Psoas muscle (tissue), 8 donors: ENCODE measurements at regions of chrX and their contacts with region 1.

Region 1: GRCh38 chrX:3345281-3346191 is 916 bp downstream of the MXRA5 start:
- DNase-seq: peak; percentile 55 to 61
- ATAC-seq: peak in 3 of 4 donors; percentile 28 to 52 (median 35)
- H3K4me3 ChIP-seq: peak overlapping the region; percentile 52
- H3K27ac ChIP-seq: peak overlapping the region; percentile 23
- H3K4me1 ChIP-seq: no peaks in the 10 kb centered on the region
- H3K27me3 ChIP-seq: peaks cover 0 to 37% (median 3%) of the 10 kb centered on the region in 3 donors
- CTCF ChIP-seq: no peak

Region 2: DNA sequence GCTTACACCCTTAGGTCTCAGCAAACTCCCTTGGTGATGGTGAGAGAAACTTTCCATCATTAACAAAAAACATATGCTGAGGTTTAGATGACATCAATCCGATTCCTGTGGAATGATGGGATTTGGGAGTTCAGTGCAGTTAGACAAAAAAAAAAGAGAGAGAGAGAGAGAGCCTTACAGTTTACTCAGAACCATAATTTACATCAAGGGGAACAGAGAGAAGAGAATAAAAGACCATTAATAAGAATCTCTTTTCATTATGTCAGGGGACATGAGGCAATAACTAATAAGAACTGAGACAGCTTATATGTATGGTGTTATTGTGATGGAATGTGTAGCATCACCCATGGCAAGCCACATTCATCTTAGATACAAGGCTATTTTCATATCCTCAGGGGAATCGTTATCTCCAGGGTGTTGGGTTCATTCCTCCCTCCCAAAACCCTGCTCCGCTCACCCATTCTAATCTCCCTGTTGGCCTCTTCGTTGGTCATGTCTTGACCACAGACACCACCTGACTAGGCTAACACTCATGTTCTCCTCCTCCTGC is 176.6 kb after region 1 on chrX:
- intact Hi-C with region 1: loop called in 1 of 2 experiments (anchors 10 kb)
- DNase-seq: no peak
- ATAC-seq: no peak
- H3K4me3 ChIP-seq: no peak overlapping the region
- H3K27ac ChIP-seq: no peak overlapping the region
- H3K4me1 ChIP-seq: no peaks in the 10 kb centered on the region
- H3K27me3 ChIP-seq: no peaks in the 10 kb centered on the region
- CTCF ChIP-seq: no peak